Activated B cell treated with CpG ODN at 0.5 μM for 24 hours (primary cell): ENCODE measurements at regions of chr19 and their contacts with region 1.

Region 1: DNA sequence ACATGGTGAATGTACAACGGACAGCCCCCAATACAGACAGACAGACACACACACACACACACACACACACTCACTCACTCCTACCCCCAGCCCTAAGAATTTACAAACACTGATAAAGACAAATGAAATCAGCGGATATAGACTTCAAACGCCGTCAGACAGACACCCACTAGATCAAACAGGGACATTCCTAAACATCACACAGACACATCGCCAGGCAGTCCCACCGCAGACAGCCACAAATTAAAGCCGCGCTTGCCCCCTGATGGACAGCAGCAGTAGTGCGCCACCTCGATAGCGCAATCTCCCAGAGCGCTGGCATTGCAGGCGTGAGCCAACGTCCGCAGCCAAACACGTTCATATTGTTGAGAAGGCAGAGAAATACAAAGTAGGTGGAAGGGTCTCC is 24.7 kb upstream of the ADGRE1 start:
- DNase-seq: peak; percentile 77
- ATAC-seq: peak; percentile 89
- H3K4me3 Mint-ChIP-seq: peak overlapping the region; percentile 85
- H3K27ac Mint-ChIP-seq: peak overlapping the region; percentile 76
- H3K4me1 Mint-ChIP-seq: peaks cover 15% of the 10 kb centered on the region
- H3K27me3 Mint-ChIP-seq: peaks cover 2% of the 10 kb centered on the region
- CTCF ChIP-seq: no peak

Region 2: GRCh38 chr19:6218491-6219162 is 644.0 kb before region 1 on chr19:
- CTCF ChIA-PET with region 1: interaction called, 14 read pairs
- POLR2A ChIA-PET with region 1: interaction called, 6 read pairs
- intact Hi-C with region 1: no loop called
- DNase-seq: peak; percentile 79
- ATAC-seq: peak; percentile 90
- H3K4me3 Mint-ChIP-seq: no peak overlapping the region
- H3K27ac Mint-ChIP-seq: no peak overlapping the region
- H3K4me1 Mint-ChIP-seq: no peaks in the 10 kb centered on the region
- H3K27me3 Mint-ChIP-seq: no peaks in the 10 kb centered on the region
- CTCF ChIP-seq: no peak

Region 3: GRCh38 chr19:6460101-6460853 is 402.4 kb before region 1 on chr19:
- CTCF ChIA-PET with region 1: interaction called, 3 read pairs
- POLR2A ChIA-PET with region 1: no interaction called
- intact Hi-C with region 1: loop called (anchors 1 kb)
- DNase-seq: peak; percentile 90
- ATAC-seq: peak; percentile 82
- H3K4me3 Mint-ChIP-seq: peak overlapping the region; percentile 90
- H3K27ac Mint-ChIP-seq: peak overlapping the region; percentile 79
- H3K4me1 Mint-ChIP-seq: peaks cover 42% of the 10 kb centered on the region
- H3K27me3 Mint-ChIP-seq: peaks cover 3% of the 10 kb centered on the region
- CTCF ChIP-seq: no peak

Region 4: GRCh38 chr19:6564393-6564792 is 298.3 kb before region 1 on chr19:
- CTCF ChIA-PET with region 1: interaction called, 4 read pairs
- POLR2A ChIA-PET with region 1: interaction called, 3 read pairs
- intact Hi-C with region 1: loop called (anchors 2 kb)
- DNase-seq: no peak
- ATAC-seq: peak; percentile 47
- H3K4me3 Mint-ChIP-seq: no peak overlapping the region
- H3K27ac Mint-ChIP-seq: no peak overlapping the region
- H3K4me1 Mint-ChIP-seq: no peaks in the 10 kb centered on the region
- H3K27me3 Mint-ChIP-seq: peaks cover 5% of the 10 kb centered on the region
- CTCF ChIP-seq: no peak

Region 5: DNA sequence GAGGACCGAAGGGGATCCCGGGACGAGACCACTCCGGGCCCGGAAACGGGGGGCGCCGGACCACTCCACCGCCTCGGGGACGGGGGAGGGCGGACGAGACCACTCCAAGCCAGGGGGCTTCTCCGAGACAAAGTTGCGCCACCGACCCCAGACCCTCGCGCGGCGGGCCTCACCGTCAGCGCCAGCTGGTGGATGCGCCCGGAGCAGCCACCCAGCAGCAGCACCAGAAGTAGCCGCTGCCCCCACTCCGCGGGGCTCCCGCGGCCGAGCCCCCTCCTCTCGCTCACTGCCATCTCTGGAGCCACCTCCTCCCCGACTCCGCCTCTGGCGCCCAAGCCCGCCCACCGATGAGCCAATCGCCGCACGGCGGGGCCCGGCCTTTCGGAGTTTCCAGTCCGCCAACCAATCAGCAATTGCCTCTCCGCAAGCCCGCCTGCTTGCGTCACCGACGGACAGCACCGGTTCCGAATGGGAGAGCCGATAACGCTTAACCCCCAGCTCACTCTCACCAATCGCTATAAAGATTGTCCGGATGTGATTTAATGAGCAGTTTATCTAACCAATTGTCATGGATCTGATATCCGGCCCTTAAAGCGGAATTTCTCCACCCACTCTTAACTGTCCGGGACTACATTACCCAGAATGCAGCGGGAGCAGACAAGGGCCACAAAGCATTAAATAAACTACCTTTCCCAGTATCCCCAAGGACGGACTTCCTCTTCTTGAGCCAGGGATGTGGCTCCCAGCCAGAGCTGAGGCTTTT is 125.2 kb before region 1 on chr19 and contains the start of gene GPR108:
- CTCF ChIA-PET with region 1: interaction called, 83 read pairs
- POLR2A ChIA-PET with region 1: interaction called, 60 read pairs
- intact Hi-C with region 1: loop called (anchors 1 kb)
- DNase-seq: peak; percentile 98
- ATAC-seq: peak; percentile 74
- H3K4me3 Mint-ChIP-seq: peak within 1 kb of the TSS; percentile 96
- H3K27ac Mint-ChIP-seq: peak within 1 kb of the TSS; percentile 96
- H3K4me1 Mint-ChIP-seq: peaks cover 44% of the 10 kb centered on the region
- H3K27me3 Mint-ChIP-seq: no peaks in the 10 kb centered on the region
- CTCF ChIP-seq: no peak
- total RNA-seq, gene GPR108: 53.5 and 55.6 TPM in 2 replicates

Region 6: DNA sequence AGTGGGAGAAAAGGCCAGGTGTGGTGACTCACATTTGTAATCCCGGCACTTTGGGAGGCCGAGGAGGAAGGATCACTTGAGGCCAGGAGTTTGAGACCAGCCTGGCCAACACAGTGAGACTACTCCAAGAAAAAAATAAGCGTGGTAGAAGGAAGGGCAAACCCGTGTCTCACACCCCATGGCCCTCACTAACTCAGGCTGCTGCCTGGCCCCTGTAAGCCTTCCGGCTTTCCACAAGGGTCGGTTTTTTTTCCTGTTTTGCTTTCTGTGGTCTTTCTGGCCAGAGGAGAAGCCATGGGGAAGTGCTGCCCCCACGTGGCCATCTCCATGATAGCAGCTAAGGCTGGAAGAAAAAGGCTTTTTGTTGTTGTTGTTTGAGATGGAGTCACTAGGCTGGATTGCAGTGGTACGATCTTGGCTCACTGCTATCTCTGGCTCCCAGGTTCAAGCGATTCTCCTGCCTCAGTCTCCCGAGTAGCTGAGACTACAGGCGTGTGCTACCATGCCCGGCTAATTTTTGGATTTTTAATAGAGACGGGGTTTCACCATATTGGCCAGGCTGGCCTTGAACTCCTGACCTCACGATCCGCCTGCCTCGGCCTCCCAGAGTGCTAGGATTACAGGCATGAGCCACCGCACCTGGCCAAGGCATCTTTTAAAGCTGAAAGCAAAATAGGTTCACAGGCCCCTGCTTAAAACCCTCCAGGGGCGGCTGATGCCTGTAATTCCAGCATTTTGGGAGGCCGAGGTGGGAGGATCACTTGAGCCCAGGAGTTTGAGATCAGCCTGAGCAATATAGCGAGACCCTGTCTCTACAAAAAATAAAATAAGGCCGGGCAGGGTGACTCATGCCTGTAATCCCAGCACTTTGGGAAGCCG is 478.5 kb after region 1 on chr19:
- CTCF ChIA-PET with region 1: interaction called, 4 read pairs
- POLR2A ChIA-PET with region 1: no interaction called
- intact Hi-C with region 1: loop called (anchors 5 kb)
- DNase-seq: peak; percentile 83
- ATAC-seq: no peak
- H3K4me3 Mint-ChIP-seq: peak overlapping the region; percentile 52
- H3K27ac Mint-ChIP-seq: peak overlapping the region; percentile 82
- H3K4me1 Mint-ChIP-seq: peaks cover 91% of the 10 kb centered on the region
- H3K27me3 Mint-ChIP-seq: no peaks in the 10 kb centered on the region
- CTCF ChIP-seq: peak; percentile 64